ENCODE measurements at regions of chr2 and their contacts with region 1.

Region 1: DNA sequence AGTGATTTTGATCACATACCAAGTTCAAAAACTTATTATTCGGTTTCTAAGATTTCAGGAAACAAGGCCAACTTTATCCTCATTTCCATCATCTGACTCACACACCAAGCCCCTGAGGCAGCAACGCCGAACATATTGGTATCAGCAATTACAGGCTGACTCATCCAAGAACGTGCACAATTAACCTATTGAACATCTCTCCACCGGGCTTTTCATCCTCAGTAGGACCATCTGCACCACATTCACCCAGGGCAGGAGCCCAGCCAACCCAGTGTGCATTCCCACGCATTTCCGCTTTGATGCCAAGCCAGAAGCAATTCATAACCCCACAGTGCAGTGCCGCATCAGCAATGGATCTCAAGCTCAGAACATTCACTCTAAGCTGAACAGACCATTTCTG is 52.9 kb downstream of the SCG2 start:
- DNase-seq: peak; percentile 88
- H3K4me3 ChIP-seq: no peak overlapping the region
- H3K27ac ChIP-seq: no peak overlapping the region
- H3K4me1 ChIP-seq: peaks cover 10% of the 10 kb centered on the region
- H3K27me3 ChIP-seq: peaks cover 0 to 22% of the 10 kb centered on the region in 2 experiments
- CTCF ChIP-seq: no peak
- POLR2A ChIP-seq: peak; percentile 47

Region 2: DNA sequence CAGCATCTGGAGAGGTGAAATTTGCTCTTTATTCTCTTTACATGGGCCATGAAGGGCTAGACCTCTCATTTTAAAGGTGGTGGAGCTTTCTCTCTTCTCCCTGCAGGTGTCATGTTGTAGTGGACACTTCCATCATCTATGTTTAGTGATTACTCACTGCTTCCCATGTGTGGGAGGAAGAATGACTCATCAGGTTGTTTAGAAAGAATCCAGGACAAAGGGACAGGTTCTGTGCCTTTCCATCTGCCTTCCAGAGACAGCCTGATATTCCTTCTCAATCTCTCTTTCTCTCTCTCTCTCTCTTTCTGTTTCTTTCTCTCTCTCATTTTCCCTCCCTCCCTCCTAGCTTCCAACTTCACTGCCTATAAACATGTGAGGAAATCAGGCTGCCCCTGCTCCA is 14.2 kb after region 1 on chr2:
- CTCF ChIA-PET with region 1: interaction called, 4 read pairs
- POLR2A ChIA-PET with region 1: interaction called, 6 read pairs
- dilution Hi-C with region 1: no loop called
- intact Hi-C with region 1: loop called (anchors 1 kb)
- DNase-seq: peak; percentile 73
- H3K4me3 ChIP-seq: no peak overlapping the region
- H3K27ac ChIP-seq: peak overlapping the region; percentile 23
- H3K4me1 ChIP-seq: peaks cover 8% of the 10 kb centered on the region
- H3K27me3 ChIP-seq: peaks cover 0 to 2% of the 10 kb centered on the region in 2 experiments
- CTCF ChIP-seq: no peak
- POLR2A ChIP-seq: no peak